HCT116 (cell line): ENCODE measurements at regions of chr9 and their contacts with region 1.

Region 1: DNA sequence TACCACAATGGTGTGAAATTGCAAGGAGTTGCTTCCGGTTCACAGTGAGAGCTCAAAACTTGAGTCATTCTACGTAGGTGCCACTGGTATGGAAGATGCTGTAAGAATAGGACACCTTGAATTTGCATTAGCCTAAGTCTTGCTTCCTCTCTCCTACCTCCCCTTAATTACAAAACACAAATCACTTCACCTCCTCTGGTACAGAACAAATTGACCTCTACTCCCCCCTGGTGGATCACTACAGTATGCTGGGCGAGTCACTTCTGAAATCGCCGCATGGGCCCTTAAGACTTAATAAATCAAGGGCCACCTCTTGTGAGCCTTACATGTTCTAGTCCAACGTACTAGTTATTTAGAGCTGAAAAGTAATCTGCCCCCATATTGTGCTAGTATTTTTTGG is 145.3 kb upstream of the SMARCA2 start:
- DNase-seq: peak; percentile 7
- ATAC-seq: peak; percentile 82
- H3K4me3 ChIP-seq: no peak overlapping the region
- H3K27ac ChIP-seq: no peak overlapping the region
- H3K4me1 ChIP-seq: no peaks in the 10 kb centered on the region
- H3K27me3 ChIP-seq: no peaks in the 10 kb centered on the region
- CTCF ChIP-seq: peak; percentile 24 to 71 (median 70); a peak in 5 of 6 replicates
- POLR2A ChIP-seq: no peak
- RAD21 ChIP-seq: peak; percentile 57

Region 2: GRCh38 chr9:1018121-1018701 is 851.6 kb before region 1 on chr9:
- CTCF ChIA-PET with region 1: no interaction called
- POLR2A ChIA-PET with region 1: no interaction called
- RAD21 ChIA-PET with region 1: no interaction called
- intact Hi-C with region 1: loop called (anchors 5 kb)
- DNase-seq: peak; percentile 13
- ATAC-seq: peak; percentile 78
- H3K4me3 ChIP-seq: no peak overlapping the region
- H3K27ac ChIP-seq: no peak overlapping the region
- H3K4me1 ChIP-seq: no peaks in the 10 kb centered on the region
- H3K27me3 ChIP-seq: no peaks in the 10 kb centered on the region
- CTCF ChIP-seq: peak; percentile 21 to 46 (median 36); a peak in 4 of 6 replicates
- POLR2A ChIP-seq: no peak
- RAD21 ChIP-seq: peak; percentile 53

Region 3: DNA sequence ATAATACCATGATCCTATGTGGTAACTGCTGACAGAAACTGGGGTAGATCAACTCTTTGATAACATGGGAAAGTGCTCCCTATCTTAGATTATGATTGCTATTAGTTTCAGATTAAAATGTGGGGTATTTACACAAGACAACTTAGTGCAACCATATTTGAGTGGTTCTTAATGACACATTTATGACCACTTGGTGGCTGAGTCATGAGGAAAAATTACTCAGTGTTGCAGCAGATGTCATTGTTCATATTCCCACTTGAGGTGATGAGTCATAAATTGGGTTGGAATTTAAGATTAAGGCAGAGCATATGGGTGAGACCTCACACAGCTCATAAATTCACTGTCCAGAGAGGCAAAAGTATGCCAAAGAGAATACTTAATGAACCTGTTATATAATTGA is 411.4 kb before region 1 on chr9:
- CTCF ChIA-PET with region 1: no interaction called
- POLR2A ChIA-PET with region 1: no interaction called
- RAD21 ChIA-PET with region 1: no interaction called
- intact Hi-C with region 1: no loop called
- DNase-seq: peak; percentile 7
- ATAC-seq: no peak
- H3K4me3 ChIP-seq: no peak overlapping the region
- H3K27ac ChIP-seq: no peak overlapping the region
- H3K4me1 ChIP-seq: no peaks in the 10 kb centered on the region
- H3K27me3 ChIP-seq: no peaks in the 10 kb centered on the region
- CTCF ChIP-seq: no peak
- POLR2A ChIP-seq: no peak
- RAD21 ChIP-seq: no peak

Region 4: DNA sequence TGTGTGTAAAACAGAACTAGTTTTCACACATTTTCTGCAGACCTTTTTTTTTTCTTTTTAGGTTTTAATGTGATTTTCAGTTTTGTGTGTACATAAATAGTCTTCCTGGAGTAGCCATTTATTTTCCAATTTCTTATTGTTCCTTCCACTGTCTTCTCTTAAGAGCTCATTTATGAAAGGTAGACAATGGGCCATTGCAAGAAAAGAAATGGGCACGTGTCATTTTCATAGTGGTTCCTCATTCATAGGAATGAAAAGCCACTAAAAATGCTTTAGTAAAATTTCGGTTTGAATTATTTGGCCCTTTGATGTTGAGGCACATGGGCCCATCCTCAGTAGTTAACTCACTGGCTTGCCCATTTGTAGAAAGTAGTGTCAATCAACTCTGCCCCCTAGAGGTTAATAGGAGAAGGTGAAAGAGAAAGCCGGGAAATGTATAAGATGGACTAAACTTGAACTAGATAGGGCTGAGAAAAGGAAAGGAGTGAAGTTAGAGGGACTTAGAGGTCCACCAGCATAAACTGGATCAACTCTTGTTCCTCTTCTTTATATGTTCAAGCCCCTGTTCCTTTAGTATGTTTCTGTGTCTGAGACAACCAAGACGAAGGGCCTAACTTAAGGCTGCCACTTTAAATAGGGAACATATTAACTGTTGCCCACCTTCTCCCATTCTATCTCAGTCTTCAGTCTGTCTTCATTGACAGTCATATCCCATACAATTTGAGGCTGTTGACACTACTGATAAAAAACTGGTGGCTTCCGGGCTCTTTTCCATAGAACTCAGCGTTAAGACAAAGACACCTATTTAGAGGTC is 217.9 kb after region 1 on chr9:
- CTCF ChIA-PET with region 1: no interaction called
- POLR2A ChIA-PET with region 1: no interaction called
- RAD21 ChIA-PET with region 1: no interaction called
- intact Hi-C with region 1: loop called (anchors 5 kb)
- DNase-seq: peak; percentile 42
- ATAC-seq: peak; percentile 87
- H3K4me3 ChIP-seq: no peak overlapping the region
- H3K27ac ChIP-seq: no peak overlapping the region
- H3K4me1 ChIP-seq: no peaks in the 10 kb centered on the region
- H3K27me3 ChIP-seq: no peaks in the 10 kb centered on the region
- CTCF ChIP-seq: peak; percentile 32 to 76 (median 73); a peak in 5 of 6 replicates
- POLR2A ChIP-seq: no peak
- RAD21 ChIP-seq: peak; percentile 48